Prostate gland (tissue), 2 donors: ENCODE measurements at regions of chr3 and their contacts with region 1.

Region 1: DNA sequence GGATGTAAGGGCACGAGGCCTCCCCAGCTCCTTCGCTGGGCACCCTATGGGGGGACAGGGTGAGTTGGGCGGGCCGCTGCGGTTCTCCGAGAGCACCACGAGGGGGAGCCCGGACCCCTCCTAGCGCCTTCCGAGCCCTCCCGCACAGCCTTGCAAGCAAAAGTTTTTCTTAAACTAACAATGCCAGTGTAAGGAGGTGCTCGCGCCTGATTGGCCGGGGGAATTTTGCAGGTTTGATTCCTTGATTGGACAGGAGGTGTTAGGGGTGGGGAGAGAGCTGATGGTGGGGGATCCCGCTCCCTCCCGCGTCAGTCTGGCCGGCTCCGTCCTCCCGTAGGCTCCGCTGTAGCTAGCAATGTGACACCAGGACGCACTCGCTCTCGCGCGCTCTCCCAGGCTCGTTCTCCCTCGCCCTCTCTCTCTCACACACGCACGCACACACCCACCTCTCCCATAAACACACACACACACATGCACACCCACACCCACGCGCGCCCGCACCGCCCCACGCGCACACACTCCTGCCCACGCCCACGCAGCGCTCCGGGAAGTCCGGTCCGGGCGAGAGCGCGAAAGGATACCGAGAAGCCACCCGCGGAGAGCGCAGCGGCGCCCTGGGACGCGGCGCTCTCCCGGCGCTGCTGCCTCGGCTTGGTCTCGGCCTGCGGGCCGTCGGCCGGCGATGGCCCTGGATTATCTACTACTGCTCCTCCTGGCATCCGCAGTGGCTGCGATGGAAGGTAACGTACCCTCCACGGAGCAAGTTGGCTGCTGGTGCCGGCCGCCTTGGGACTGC is at the start of gene EPHB1:
- DNase-seq: peak; percentile 77
- H3K4me3 ChIP-seq: peak within 1 kb of the TSS; percentile 21 to 38
- H3K27ac ChIP-seq: peak within 1 kb of the TSS in 1 of 2 donors; percentile 32
- H3K4me1 ChIP-seq: peaks cover 4% of the 10 kb centered on the region
- H3K27me3 ChIP-seq: peaks cover 11% of the 10 kb centered on the region
- CTCF ChIP-seq: peak; percentile 67 to 91 (median 86)
- POLR2A ChIP-seq: peak; percentile 41
- total RNA-seq, gene EPHB1: 2.3 to 21.2 TPM

Region 2: GRCh38 chr3:134496471-134497071 is 298.6 kb before region 1 on chr3:
- intact Hi-C with region 1: no loop called
- DNase-seq: no peak
- H3K4me3 ChIP-seq: no peak overlapping the region
- H3K27ac ChIP-seq: no peak overlapping the region
- H3K4me1 ChIP-seq: no peaks in the 10 kb centered on the region
- H3K27me3 ChIP-seq: no peaks in the 10 kb centered on the region
- CTCF ChIP-seq: no peak
- POLR2A ChIP-seq: no peak

Region 3: GRCh38 chr3:134600685-134601463 is 194.3 kb before region 1 on chr3:
- intact Hi-C with region 1: loop called (anchors 5 kb)
- DNase-seq: peak; percentile 27
- H3K4me3 ChIP-seq: no peak overlapping the region
- H3K27ac ChIP-seq: no peak overlapping the region
- H3K4me1 ChIP-seq: no peaks in the 10 kb centered on the region
- H3K27me3 ChIP-seq: no peaks in the 10 kb centered on the region
- CTCF ChIP-seq: peak; percentile 64 to 82 (median 74)
- POLR2A ChIP-seq: no peak

Region 4: DNA sequence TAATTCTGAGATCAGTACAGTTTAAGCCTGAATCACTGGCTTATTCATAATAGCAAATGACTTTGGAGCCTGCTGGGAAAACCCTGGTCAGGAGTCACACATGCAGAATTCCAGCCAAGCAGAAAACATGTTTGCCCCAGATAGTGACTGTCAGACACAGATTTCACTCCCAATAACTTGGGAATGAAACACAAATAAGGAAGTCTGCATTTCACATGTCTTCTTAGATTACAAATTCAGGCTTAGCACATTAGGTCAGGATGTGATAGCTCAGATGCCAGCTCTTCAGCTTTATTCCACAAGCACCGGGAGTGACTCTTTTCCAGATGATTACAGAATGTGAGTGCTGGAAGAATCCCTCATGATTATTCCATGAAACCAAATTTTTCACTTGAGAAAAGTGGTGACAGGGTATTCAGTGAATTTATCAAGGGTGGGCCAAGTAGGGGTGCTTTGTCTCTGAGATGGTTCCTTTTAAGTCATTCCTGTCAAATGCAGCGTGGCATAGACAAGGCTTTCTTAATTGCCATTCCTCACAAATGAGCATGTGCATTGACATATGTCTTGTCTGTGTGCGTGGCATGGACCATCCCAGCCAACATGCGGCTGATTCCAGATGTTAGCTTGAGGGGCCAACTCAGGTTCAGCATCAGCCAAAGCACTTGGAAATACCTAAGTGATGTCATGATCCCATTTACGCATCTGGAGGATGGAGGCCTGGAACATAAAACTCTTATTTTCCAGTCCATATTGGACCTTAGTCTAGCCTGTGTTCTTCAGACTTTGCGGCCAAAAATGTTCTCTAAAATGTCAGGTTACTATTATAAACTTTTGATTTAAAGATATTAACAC is 190.9 kb after region 1 on chr3:
- intact Hi-C with region 1: loop called (anchors 5 kb)
- DNase-seq: no peak
- H3K4me3 ChIP-seq: no peak overlapping the region
- H3K27ac ChIP-seq: no peak overlapping the region
- H3K4me1 ChIP-seq: no peaks in the 10 kb centered on the region
- H3K27me3 ChIP-seq: no peaks in the 10 kb centered on the region
- CTCF ChIP-seq: no peak
- POLR2A ChIP-seq: no peak

Region 5: GRCh38 chr3:135000465-135000864 is 205.3 kb after region 1 on chr3:
- intact Hi-C with region 1: no loop called
- DNase-seq: no peak
- H3K4me3 ChIP-seq: no peak overlapping the region
- H3K27ac ChIP-seq: no peak overlapping the region
- H3K4me1 ChIP-seq: no peaks in the 10 kb centered on the region
- H3K27me3 ChIP-seq: no peaks in the 10 kb centered on the region
- CTCF ChIP-seq: no peak
- POLR2A ChIP-seq: no peak

Region 6: GRCh38 chr3:135503760-135504686 is 708.9 kb after region 1 on chr3:
- intact Hi-C with region 1: loop called (anchors 2 kb)
- DNase-seq: peak; percentile 35
- H3K4me3 ChIP-seq: no peak overlapping the region
- H3K27ac ChIP-seq: no peak overlapping the region
- H3K4me1 ChIP-seq: no peaks in the 10 kb centered on the region
- H3K27me3 ChIP-seq: no peaks in the 10 kb centered on the region
- CTCF ChIP-seq: peak in 3 of 4 experiments; percentile 38 to 51 (median 46)
- POLR2A ChIP-seq: no peak

Region 7: GRCh38 chr3:136042608-136043221 is 1247.6 kb after region 1 on chr3:
- intact Hi-C with region 1: loop called (anchors 10 kb)
- DNase-seq: no peak
- H3K4me3 ChIP-seq: no peak overlapping the region
- H3K27ac ChIP-seq: no peak overlapping the region
- H3K4me1 ChIP-seq: no peaks in the 10 kb centered on the region
- H3K27me3 ChIP-seq: no peaks in the 10 kb centered on the region
- CTCF ChIP-seq: peak in 3 of 4 experiments; percentile 40 to 54 (median 49)
- POLR2A ChIP-seq: no peak